T-cell (primary cell): ENCODE measurements at regions of chr15 and their contacts with region 1.

Region 1: DNA sequence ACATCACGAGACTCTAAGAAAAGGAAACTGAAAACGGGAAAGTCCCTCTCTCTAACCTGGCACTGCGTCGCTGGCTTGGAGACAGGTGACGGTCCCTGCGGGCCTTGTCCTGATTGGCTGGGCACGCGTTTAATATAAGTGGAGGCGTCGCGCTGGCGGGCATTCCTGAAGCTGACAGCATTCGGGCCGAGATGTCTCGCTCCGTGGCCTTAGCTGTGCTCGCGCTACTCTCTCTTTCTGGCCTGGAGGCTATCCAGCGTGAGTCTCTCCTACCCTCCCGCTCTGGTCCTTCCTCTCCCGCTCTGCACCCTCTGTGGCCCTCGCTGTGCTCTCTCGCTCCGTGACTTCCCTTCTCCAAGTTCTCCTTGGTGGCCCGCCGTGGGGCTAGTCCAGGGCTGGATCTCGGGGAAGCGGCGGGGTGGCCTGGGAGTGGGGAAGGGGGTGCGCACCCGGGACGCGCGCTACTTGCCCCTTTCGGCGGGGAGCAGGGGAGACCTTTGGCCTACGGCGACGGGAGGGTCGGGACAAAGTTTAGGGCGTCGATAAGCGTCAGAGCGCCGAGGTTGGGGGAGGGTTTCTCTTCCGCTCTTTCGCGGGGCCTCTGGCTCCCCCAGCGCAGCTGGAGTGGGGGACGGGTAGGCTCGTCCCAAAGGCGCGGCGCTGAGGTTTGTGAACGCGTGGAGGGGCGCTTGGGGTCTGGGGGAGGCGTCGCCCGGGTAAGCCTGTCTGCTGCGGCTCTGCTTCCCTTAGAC is at the start of gene B2M:
- DNase-seq: peak; percentile 85 to 99 (median 93)
- ATAC-seq: peak; percentile 76 to 87 (median 82)
- H3K4me3 ChIP-seq: peak within 1 kb of the TSS; percentile 89 to 96
- H3K4me3 Mint-ChIP-seq: peak within 1 kb of the TSS; percentile 95 to 100 (median 98)
- H3K27ac ChIP-seq: peak within 1 kb of the TSS; percentile 99
- H3K27ac Mint-ChIP-seq: peak within 1 kb of the TSS; percentile 100
- H3K4me1 ChIP-seq: peaks cover 32 to 35% of the 10 kb centered on the region in 2 experiments
- H3K4me1 Mint-ChIP-seq: peaks cover 46 to 84% (median 47%) of the 10 kb centered on the region in 3 donors
- H3K27me3 ChIP-seq: no peaks in the 10 kb centered on the region
- H3K27me3 Mint-ChIP-seq: no peaks in the 10 kb centered on the region
- total RNA-seq, gene B2M: 5,457 to 6,662 (median 6,121) TPM

Region 2: GRCh38 chr15:44516436-44516835 is 195.1 kb before region 1 on chr15:
- CTCF ChIA-PET with region 1: interaction called in 1 of 2 experiments, 12 read pairs
- POLR2A ChIA-PET with region 1: no interaction called
- DNase-seq: no peak
- ATAC-seq: no peak
- H3K4me3 ChIP-seq: no peak overlapping the region
- H3K4me3 Mint-ChIP-seq: no peak overlapping the region
- H3K27ac ChIP-seq: no peak overlapping the region
- H3K27ac Mint-ChIP-seq: no peak overlapping the region
- H3K4me1 ChIP-seq: no peaks in the 10 kb centered on the region
- H3K4me1 Mint-ChIP-seq: peaks cover 0 to 6% (median 3%) of the 10 kb centered on the region in 3 donors
- H3K27me3 ChIP-seq: no peaks in the 10 kb centered on the region
- H3K27me3 Mint-ChIP-seq: no peaks in the 10 kb centered on the region

Region 3: GRCh38 chr15:44620081-44620480 is 91.5 kb before region 1 on chr15:
- CTCF ChIA-PET with region 1: no interaction called
- POLR2A ChIA-PET with region 1: no interaction called
- DNase-seq: no peak
- ATAC-seq: no peak
- H3K4me3 ChIP-seq: no peak overlapping the region
- H3K4me3 Mint-ChIP-seq: no peak overlapping the region
- H3K27ac ChIP-seq: no peak overlapping the region
- H3K27ac Mint-ChIP-seq: no peak overlapping the region
- H3K4me1 ChIP-seq: no peaks in the 10 kb centered on the region
- H3K4me1 Mint-ChIP-seq: peaks cover 0 to under 1% (median 0%) of the 10 kb centered on the region in 3 donors
- H3K27me3 ChIP-seq: no peaks in the 10 kb centered on the region
- H3K27me3 Mint-ChIP-seq: no peaks in the 10 kb centered on the region

Region 4: GRCh38 chr15:44663409-44664308 is 47.9 kb before region 1 on chr15 and contains the start of gene SPG11:
- CTCF ChIA-PET with region 1: interaction called, 4 to 160 read pairs
- POLR2A ChIA-PET with region 1: interaction called, 71 to 139 read pairs
- DNase-seq: peak; percentile 91 to 98 (median 95)
- ATAC-seq: peak; percentile 80 to 86 (median 82)
- H3K4me3 ChIP-seq: peak within 1 kb of the TSS; percentile 86 to 90
- H3K4me3 Mint-ChIP-seq: peak within 1 kb of the TSS; percentile 90 to 95 (median 93)
- H3K27ac ChIP-seq: peak within 1 kb of the TSS; percentile 93
- H3K27ac Mint-ChIP-seq: peak within 1 kb of the TSS; percentile 94 to 96
- H3K4me1 ChIP-seq: peaks cover 49 to 56% of the 10 kb centered on the region in 2 experiments
- H3K4me1 Mint-ChIP-seq: peaks cover 65 to 70% (median 68%) of the 10 kb centered on the region in 3 donors
- H3K27me3 ChIP-seq: no peaks in the 10 kb centered on the region
- H3K27me3 Mint-ChIP-seq: no peaks in the 10 kb centered on the region
- total RNA-seq, gene SPG11: 108 to 124 (median 118) TPM

Region 5: DNA sequence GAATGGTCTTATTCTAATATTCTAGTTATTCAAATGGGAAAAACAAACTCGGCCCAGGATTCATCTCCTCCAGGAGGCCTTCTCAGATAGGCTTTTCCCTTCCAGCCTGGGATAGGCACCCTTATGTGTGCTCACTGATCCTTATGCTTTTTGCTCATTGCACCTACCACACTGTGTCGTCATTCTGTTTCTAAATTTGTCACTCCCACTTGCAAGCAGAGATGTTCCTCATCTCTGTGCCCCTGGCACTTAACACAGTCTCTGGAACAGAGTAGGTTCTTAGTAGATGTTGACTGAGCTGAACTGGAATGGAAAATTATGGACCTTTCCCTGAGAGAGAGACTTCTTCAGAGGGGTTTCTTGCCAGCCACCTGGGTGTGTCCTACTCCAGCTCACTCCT is 29.3 kb before region 1 on chr15:
- CTCF ChIA-PET with region 1: interaction called in 1 of 2 experiments, 16 read pairs
- POLR2A ChIA-PET with region 1: interaction called, 3 to 21 read pairs
- DNase-seq: no peak
- ATAC-seq: no peak
- H3K4me3 ChIP-seq: no peak overlapping the region
- H3K4me3 Mint-ChIP-seq: peak overlapping the region; percentile 43 to 81 (median 62)
- H3K27ac ChIP-seq: peak overlapping the region; percentile 89
- H3K27ac Mint-ChIP-seq: peak overlapping the region; percentile 96 to 97
- H3K4me1 ChIP-seq: peaks cover 42 to 71% of the 10 kb centered on the region in 2 experiments
- H3K4me1 Mint-ChIP-seq: peaks cover 88 to 92% (median 92%) of the 10 kb centered on the region in 3 donors
- H3K27me3 ChIP-seq: no peaks in the 10 kb centered on the region
- H3K27me3 Mint-ChIP-seq: no peaks in the 10 kb centered on the region

Region 6: DNA sequence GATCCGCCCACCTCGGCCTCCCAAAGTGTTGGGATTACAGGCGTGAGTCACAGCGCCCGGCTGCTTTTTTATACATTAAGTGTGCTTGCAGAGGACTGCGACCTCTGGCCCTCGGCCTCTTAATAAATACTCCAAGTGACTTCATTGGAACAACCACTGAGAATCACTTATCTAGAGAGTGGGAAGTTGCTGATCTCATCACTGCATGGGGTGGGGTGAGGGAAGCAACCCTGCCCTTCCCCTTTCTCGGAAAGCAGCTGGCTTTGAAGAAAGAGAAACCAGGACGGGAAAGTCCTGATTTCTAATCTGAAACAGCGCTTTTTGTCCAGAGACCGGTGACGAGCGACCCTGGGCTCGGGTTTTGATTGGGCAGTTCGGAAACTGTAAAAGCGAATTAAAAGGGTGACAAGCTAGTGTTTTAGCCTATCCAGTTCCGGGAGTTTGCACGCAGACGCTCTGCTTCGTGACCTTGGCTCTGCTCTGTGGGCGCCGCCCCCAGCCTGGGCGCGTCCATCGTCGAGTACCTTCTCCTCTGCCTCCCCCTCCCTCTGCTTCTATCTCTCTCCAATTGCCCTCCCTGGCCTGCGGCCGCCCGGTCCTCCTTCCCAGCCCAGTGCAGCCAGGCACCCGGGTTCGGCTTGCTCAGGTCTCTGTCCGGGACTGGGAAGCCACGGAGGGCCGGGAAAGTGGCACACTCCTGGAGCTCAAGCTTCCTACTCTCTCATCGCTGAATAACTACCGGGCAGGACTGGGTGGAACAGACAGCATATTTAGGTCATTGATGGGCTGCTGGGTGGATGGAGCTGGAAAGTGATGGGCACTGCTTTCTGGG is 17.3 kb after region 1 on chr15:
- CTCF ChIA-PET with region 1: interaction called, 4 to 97 read pairs
- POLR2A ChIA-PET with region 1: interaction called, 122 to 289 read pairs
- DNase-seq: peak; percentile 86 to 98 (median 95)
- ATAC-seq: peak; percentile 80 to 84 (median 81)
- H3K4me3 ChIP-seq: peak overlapping the region; percentile 71 to 79
- H3K4me3 Mint-ChIP-seq: peak overlapping the region; percentile 94 to 100 (median 100)
- H3K27ac ChIP-seq: peak overlapping the region; percentile 99
- H3K27ac Mint-ChIP-seq: peak overlapping the region; percentile 99 to 100
- H3K4me1 ChIP-seq: peaks cover 38 to 75% of the 10 kb centered on the region in 2 experiments
- H3K4me1 Mint-ChIP-seq: peaks cover 71 to 83% (median 79%) of the 10 kb centered on the region in 3 donors
- H3K27me3 ChIP-seq: no peaks in the 10 kb centered on the region
- H3K27me3 Mint-ChIP-seq: no peaks in the 10 kb centered on the region

Region 7: DNA sequence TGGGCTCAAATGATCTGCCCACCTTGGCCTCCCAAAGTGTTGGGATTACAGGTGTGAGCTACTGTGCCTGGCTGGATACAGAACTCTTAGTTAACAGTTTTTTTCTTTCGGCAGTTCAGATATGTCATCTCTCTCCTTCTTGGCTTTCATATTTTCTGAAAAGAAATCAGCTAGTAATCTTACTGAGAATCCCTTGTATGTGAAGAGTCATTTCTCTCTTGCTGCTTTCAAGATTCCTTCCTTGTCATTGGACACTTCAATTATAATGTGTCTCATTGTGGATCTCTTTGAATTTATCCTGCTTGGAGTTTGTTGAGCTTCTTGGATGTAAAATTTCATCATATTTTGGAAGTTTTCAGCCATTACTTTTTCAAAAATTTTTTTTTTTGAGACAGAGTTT is 41.8 kb after region 1 on chr15:
- CTCF ChIA-PET with region 1: no interaction called
- POLR2A ChIA-PET with region 1: interaction called, 9 to 10 read pairs
- DNase-seq: no peak
- ATAC-seq: no peak
- H3K4me3 ChIP-seq: no peak overlapping the region
- H3K4me3 Mint-ChIP-seq: no peak overlapping the region
- H3K27ac ChIP-seq: no peak overlapping the region
- H3K27ac Mint-ChIP-seq: no peak overlapping the region
- H3K4me1 ChIP-seq: no peaks in the 10 kb centered on the region
- H3K4me1 Mint-ChIP-seq: peaks cover 0 to 9% (median 2%) of the 10 kb centered on the region in 3 donors
- H3K27me3 ChIP-seq: no peaks in the 10 kb centered on the region
- H3K27me3 Mint-ChIP-seq: no peaks in the 10 kb centered on the region